PC-9 (cell line): ENCODE measurements at regions of chr3 and their contacts with region 1.

Region 1: DNA sequence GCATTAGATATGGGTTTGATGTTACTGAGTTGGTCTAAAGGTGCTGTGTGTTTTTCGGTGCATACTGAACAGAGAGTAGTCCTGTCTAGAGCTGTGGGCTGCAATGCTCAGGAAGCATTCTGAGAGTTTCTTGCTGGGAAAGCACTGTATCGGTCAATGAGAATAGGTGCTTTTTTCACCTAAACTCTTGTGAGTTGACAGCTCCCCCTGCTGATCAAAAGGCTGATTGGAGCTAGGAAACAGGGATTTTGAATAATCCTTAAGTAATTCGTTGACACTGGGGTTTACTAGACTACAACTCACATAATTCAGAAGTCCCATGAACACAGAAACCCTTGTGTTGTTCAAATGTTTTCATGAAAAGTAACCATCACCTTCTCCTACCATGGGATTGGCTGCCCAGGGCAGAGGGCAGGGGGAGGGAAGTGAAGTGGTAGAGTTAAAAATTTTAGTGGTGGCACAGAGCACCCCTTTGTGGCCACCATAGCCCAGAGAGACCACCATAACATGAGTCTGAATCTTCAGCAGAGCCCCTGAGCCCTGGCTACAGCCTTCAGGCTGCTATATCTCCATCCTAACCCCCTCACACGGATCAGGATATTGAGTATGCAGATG is 13.0 kb upstream of the MANF start:
- DNase-seq: peak; percentile 37 to 50
- H3K4me3 ChIP-seq: no peak overlapping the region
- H3K27ac ChIP-seq: no peak overlapping the region
- H3K4me1 ChIP-seq: no peaks in the 10 kb centered on the region
- H3K27me3 ChIP-seq: no peaks in the 10 kb centered on the region
- CTCF ChIP-seq: peak; percentile 82

Region 2: DNA sequence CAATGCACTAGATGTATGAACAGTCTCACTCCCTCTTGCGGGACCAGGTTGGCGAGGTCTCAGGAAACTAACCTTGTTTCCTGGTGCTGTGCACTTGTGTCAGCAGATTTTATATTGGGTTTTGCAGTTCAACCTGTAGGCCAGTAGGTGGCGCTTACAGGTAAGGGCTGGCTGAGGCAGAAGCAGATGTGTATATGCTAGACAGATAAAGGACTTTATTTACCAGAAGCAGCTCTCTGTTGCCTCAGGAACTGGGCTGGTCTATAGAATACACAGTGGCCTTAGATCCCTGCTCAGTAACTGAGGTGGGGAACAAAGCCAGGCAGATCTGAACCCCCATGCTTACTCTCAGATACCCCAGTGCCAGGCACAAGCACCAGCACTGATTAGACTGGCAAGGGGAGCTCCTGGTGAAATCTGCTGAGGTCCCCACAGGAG is 400.5 kb before region 1 on chr3:
- CTCF ChIA-PET with region 1: no interaction called
- POLR2A ChIA-PET with region 1: no interaction called
- intact Hi-C with region 1: loop called (anchors 2 kb)
- DNase-seq: peak; percentile 56 to 68
- H3K4me3 ChIP-seq: no peak overlapping the region
- H3K27ac ChIP-seq: no peak overlapping the region
- H3K4me1 ChIP-seq: no peaks in the 10 kb centered on the region; the same call in 1 of the 2 replicates
- H3K27me3 ChIP-seq: no peaks in the 10 kb centered on the region
- CTCF ChIP-seq: peak; percentile 89

Region 3: DNA sequence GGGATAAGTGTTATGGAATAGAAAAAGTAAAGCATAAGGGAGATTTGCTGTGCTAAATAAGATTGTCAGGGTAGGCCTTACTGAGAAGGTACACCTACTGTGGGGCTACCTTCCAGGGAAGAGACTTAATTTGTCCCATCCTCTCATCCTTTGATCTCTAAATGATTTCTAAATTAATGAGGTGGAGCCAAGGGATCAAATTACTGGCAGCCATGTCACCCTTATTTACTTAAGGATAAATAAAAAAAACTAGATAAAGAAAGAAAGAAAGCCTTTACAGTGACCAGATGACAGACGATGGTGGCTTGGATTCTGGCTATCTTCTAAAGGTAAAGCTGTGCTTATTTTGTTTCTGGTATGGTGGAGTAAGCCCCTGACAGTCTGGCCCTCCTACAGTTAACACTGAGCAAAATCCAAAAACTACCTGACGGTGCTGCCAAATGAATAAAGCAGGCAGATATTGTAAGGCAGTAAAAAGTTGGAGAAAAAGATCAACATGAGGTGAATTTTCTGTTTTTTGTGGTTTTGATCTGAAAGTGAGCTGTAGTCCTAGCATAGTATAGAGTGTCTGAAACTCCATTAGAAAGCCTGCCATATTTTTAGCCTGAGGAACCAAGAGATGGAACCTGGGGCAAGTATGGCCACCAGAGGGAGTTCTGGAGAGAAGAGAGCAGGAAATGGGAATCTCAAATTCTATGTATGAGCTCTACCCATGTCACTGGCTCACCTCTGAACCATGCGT is 272.1 kb before region 1 on chr3:
- CTCF ChIA-PET with region 1: interaction called, 5 read pairs
- POLR2A ChIA-PET with region 1: no interaction called
- intact Hi-C with region 1: loop called (anchors 2 kb)
- DNase-seq: peak in 1 of 2 experiments; percentile 38
- H3K4me3 ChIP-seq: no peak overlapping the region
- H3K27ac ChIP-seq: no peak overlapping the region
- H3K4me1 ChIP-seq: no peaks in the 10 kb centered on the region
- H3K27me3 ChIP-seq: no peaks in the 10 kb centered on the region
- CTCF ChIP-seq: peak; percentile 69

Region 4: GRCh38 chr3:51269466-51269865 is 102.6 kb before region 1 on chr3:
- CTCF ChIA-PET with region 1: no interaction called
- POLR2A ChIA-PET with region 1: no interaction called
- intact Hi-C with region 1: no loop called
- DNase-seq: no peak
- H3K4me3 ChIP-seq: no peak overlapping the region
- H3K27ac ChIP-seq: no peak overlapping the region
- H3K4me1 ChIP-seq: no peaks in the 10 kb centered on the region
- H3K27me3 ChIP-seq: no peaks in the 10 kb centered on the region
- CTCF ChIP-seq: no peak

Region 5: DNA sequence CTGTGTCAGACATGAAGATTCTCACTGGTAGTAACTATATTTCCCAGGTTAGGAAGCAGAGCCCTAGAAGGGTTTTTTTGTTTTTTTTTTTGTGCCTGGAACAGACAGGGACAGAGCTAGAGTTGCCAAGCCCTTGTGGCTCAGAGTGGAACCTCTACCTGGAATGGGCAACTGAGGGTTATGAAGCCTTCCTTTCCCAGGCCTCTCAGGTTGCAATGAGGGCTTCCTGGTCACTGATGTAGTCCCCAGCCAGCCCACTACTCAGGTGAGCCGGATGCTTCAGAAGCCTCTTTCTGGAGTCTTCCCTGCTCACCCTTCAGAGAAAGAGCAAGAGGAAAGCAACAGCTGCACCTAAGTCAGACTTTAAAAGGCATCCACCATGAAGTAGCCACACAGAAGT is 35.8 kb before region 1 on chr3:
- CTCF ChIA-PET with region 1: no interaction called
- POLR2A ChIA-PET with region 1: no interaction called
- intact Hi-C with region 1: no loop called
- DNase-seq: no peak
- H3K4me3 ChIP-seq: no peak overlapping the region
- H3K27ac ChIP-seq: no peak overlapping the region
- H3K4me1 ChIP-seq: peaks cover 29% of the 10 kb centered on the region
- H3K27me3 ChIP-seq: no peaks in the 10 kb centered on the region
- CTCF ChIP-seq: no peak

Region 6: GRCh38 chr3:51995346-51996163 is 623.5 kb after region 1 on chr3 and contains the start of gene RPL29:
- CTCF ChIA-PET with region 1: no interaction called
- POLR2A ChIA-PET with region 1: no interaction called
- intact Hi-C with region 1: no loop called
- DNase-seq: peak; percentile 80 to 90
- H3K4me3 ChIP-seq: peak within 1 kb of the TSS; percentile 100
- H3K27ac ChIP-seq: peak within 1 kb of the TSS; percentile 95
- H3K4me1 ChIP-seq: peaks cover 20% of the 10 kb centered on the region
- H3K27me3 ChIP-seq: no peaks in the 10 kb centered on the region
- CTCF ChIP-seq: no peak; the same call in 1 of the 2 replicates
- total RNA-seq, gene RPL29: 942 and 1,278 TPM in 2 replicates